ENCODE measurements at regions of chr6 and their contacts with region 1.

Region 1: GRCh38 chr6:119110601-119111548 is 32.4 kb upstream of the FAM184A start:
- DNase-seq: peak; percentile 62
- H3K4me3 Mint-ChIP-seq: no peak overlapping the region
- H3K27ac Mint-ChIP-seq: no peak overlapping the region
- H3K4me1 Mint-ChIP-seq: peaks cover 22% of the 10 kb centered on the region
- H3K27me3 Mint-ChIP-seq: no peaks in the 10 kb centered on the region

Region 2: GRCh38 chr6:118283766-118284165 is 827.1 kb before region 1 on chr6:
- CTCF ChIA-PET with region 1: interaction called, 4 read pairs
- intact Hi-C with region 1: loop called (anchors 1 kb)
- DNase-seq: peak; percentile 69
- H3K4me3 Mint-ChIP-seq: no peak overlapping the region
- H3K27ac Mint-ChIP-seq: no peak overlapping the region
- H3K4me1 Mint-ChIP-seq: peaks cover 2% of the 10 kb centered on the region
- H3K27me3 Mint-ChIP-seq: peaks cover 3% of the 10 kb centered on the region

Region 3: GRCh38 chr6:118934461-118935330 is 176.2 kb before region 1 on chr6 and contains the start of gene MCM9:
- CTCF ChIA-PET with region 1: interaction called, 4 read pairs
- intact Hi-C with region 1: loop called (anchors 1 kb)
- DNase-seq: peak; percentile 89
- H3K4me3 Mint-ChIP-seq: peak within 1 kb of the TSS; percentile 87
- H3K27ac Mint-ChIP-seq: peak within 1 kb of the TSS; percentile 90
- H3K4me1 Mint-ChIP-seq: peaks cover 29% of the 10 kb centered on the region
- H3K27me3 Mint-ChIP-seq: no peaks in the 10 kb centered on the region
- total RNA-seq, gene MCM9: 16.3 to 16.4 TPM

Region 4: DNA sequence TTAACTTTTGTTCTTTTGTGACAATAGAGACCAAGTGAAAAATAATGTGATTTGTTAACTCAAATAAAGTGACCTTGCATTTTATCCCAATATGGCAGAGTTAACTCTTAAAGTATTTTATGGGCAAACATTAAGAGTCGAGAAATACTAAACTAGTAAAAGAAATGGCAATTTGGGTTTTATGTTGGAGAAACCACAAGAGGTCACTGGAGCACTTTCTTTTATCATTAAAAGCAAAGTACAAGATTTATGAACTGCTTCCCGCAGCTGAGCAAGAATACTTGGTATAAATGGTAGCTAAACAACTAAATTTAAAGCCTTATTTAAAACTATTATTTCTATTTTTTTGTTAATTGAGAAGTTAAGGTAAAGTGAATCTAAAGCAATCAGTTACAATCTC is 142.5 kb before region 1 on chr6:
- CTCF ChIA-PET with region 1: interaction called, 85 read pairs
- intact Hi-C with region 1: loop called (anchors 1 kb)
- DNase-seq: no peak
- H3K4me3 Mint-ChIP-seq: no peak overlapping the region
- H3K27ac Mint-ChIP-seq: no peak overlapping the region
- H3K4me1 Mint-ChIP-seq: no peaks in the 10 kb centered on the region
- H3K27me3 Mint-ChIP-seq: no peaks in the 10 kb centered on the region

Region 5: DNA sequence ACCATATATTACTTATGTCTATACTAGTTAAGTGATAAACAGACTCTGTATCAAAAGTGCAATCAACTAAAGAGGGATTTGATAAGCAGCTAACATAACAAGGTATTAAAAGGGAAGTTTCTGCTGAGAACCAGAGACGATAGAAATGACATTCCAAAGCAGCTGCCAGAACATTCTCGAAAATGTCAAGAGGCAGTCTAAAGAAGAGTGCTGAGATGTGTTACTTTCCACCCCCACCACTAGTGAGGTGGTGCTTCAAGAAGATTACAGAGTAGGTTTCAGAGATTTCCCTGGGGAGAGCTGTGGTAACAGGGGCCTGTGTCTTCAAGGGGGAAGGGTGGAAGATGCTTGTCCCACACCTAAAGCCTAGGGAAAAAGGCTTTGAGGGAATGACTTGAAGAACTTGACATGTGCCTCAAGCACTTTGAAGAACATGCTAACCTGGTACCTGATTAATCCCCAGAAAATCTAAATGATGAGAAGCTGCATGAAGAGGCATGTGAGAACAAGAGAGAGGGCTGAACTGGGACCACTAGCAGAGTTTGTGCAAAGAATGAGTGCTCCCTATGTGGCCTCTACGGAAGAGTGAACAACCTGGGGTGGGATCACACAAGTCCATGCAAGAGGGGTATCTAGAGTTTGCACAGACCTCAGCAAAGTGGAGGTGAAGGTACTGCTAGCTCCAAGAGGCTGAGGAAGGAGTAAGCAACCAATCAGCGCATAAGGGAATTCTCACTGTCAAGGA is 37.4 kb before region 1 on chr6:
- CTCF ChIA-PET with region 1: interaction called, 13 read pairs
- intact Hi-C with region 1: loop called (anchors 1 kb)
- DNase-seq: no peak
- H3K4me3 Mint-ChIP-seq: no peak overlapping the region
- H3K27ac Mint-ChIP-seq: peak overlapping the region; percentile 39
- H3K4me1 Mint-ChIP-seq: peaks cover 49% of the 10 kb centered on the region
- H3K27me3 Mint-ChIP-seq: no peaks in the 10 kb centered on the region

Region 6: DNA sequence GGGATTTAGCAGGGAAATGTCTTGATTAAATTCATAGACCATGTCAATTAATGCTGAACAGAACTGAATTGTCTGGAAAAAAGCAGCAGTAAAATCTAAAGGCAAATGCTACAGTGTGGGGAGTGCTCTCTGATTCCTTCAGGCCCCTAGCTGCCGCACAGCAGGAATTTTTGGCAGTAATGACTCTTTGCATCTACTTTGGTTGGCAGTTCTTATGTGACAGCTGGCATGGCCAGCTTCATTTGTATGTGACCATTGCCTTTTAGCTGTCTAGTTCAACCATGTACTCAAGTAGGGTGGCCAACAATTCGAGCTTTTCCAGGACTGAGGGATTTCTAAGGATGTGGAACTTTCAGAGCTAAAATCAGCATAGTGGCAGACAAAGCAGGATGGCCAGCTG is 737.8 kb after region 1 on chr6:
- CTCF ChIA-PET with region 1: no interaction called
- intact Hi-C with region 1: no loop called
- DNase-seq: no peak
- H3K4me3 Mint-ChIP-seq: no peak overlapping the region
- H3K27ac Mint-ChIP-seq: no peak overlapping the region
- H3K4me1 Mint-ChIP-seq: no peaks in the 10 kb centered on the region
- H3K27me3 Mint-ChIP-seq: peaks cover 2% of the 10 kb centered on the region